ENCODE measurements at regions of chr5 and their contacts with region 1.

Region 1: DNA sequence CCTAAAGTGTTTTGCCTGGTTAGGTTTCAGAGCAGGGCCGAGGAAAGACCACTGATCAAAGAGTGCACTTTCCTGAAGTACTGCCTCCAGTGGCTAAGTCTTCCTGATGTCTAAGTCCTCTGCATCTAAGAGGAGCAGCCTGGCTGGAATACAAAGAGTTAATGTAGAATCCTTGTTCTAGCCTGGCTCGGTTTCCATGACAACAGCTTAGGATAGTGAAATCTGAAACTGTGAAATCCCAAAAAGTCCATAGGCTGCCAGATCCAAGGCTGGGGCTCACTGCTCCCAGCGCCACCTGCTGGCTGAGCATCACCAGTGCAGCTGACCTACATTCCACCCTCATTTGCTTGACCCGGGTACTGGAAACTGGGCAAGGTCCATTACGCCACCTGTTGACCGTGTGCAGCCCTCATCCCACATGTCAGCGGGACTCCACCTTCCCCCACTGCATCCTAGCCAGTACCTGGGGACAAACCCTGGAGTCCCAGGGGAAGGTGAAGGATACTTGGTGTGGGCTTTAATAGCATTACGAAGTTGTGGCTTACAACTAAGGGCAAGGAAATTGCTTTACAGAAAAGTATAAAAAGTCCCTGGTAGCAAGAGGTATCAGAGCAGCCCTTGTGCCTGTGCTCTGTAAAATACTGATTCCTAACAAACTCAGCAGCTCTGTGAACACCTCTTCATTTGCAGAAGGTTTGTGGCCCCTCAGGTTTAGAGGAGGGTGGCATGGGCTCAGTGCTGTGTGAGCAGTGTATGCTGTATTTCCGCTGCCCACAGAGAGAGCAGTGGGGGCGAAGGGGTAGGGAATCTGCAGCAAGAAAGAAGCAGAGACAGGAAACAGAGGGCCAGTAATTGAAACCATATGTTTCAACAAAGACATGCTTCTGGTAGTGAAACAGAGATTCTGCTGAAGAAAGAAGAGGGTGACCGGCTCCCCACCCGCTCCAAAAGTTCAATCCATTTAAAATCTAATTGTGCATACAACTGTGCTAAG is 36.0 kb downstream of the PCDHGC5 start:
- DNase-seq: peak; percentile 84 to 96
- H3K4me3 ChIP-seq: no peak overlapping the region
- CTCF ChIP-seq: peak in 2 of 3 donors; percentile 44 to 96
- POLR2A ChIP-seq: no peak

Region 2: DNA sequence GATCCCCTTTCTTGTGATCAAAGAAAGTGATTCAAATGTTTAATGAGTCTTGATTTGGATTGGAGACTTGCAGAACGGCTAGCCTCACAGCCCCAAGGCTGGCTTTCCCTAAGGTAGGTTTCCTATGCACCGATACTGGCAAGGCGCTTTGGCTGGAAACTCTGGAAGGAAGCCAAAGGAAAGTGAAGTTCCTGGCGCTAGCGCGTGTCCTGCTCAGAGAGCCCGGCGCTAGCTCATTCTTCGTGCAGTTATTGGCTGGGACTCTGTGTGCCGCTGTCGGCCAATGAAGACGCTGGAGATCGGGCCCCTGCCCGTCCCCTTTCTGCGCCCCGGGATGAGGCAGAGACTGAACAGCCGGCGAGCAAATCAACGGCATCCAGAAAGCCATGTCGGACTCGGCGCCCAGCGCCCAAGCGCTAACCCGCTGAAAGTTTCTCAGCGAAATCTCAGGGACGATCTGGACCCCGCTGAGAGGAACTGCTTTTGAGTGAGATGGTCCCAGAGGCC is 49.2 kb before region 1 on chr5 and contains the start of gene PCDHGC3:
- intact Hi-C with region 1: loop called (anchors 5 kb)
- DNase-seq: peak; percentile 92 to 97
- H3K4me3 ChIP-seq: peak within 1 kb of the TSS; percentile 66
- CTCF ChIP-seq: no peak
- POLR2A ChIP-seq: no peak
- total RNA-seq, gene PCDHGC3: 45.5 to 80.8 (median 49.7) TPM

Region 3: DNA sequence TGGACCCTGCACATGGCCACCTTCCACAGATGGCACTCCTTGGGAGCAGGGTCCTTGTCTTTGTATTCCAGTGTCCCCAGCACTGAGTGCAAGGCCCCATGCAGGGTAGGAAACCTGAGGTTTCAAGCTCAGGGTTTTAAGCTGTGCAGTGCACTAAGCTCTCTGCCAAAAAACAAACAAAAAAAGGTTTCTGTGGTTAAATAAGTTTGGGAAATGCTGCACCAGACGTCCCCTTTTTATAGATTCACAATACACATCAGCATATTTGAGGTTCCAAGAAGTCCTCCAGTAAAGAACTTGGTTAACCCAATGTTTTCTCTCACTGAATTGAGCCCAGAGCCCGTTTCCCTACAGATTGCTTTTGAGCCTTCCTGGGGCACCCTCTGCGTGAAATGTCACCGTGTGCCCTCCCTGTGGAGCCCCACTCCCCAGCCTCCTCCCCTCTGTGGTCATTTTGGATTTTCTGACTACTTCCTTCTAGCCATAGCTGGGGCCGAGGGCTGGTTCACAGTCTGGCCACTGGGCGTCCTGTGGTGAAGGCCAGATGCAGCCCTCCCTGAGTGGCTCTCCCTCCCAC is 415.9 kb after region 1 on chr5:
- intact Hi-C with region 1: no loop called
- DNase-seq: no peak
- H3K4me3 ChIP-seq: no peak overlapping the region
- CTCF ChIP-seq: no peak
- POLR2A ChIP-seq: no peak